CD8-positive, alpha-beta T cell (primary cell): ENCODE measurements at regions of chr6 and their contacts with region 1.

Region 1: GRCh38 chr6:73262671-73263569 is at the start of gene KHDC1:
- DNase-seq: peak; percentile 16 to 83 (median 59)
- ATAC-seq: peak; percentile 88
- H3K4me3 ChIP-seq: peak within 1 kb of the TSS; percentile 87 to 92
- H3K4me3 Mint-ChIP-seq: peak within 1 kb of the TSS; percentile 84
- H3K27ac ChIP-seq: peak within 1 kb of the TSS; percentile 62 to 80
- H3K27ac Mint-ChIP-seq: peak within 1 kb of the TSS; percentile 84
- H3K4me1 ChIP-seq: peaks cover 19% of the 10 kb centered on the region
- H3K4me1 Mint-ChIP-seq: peaks cover 34% of the 10 kb centered on the region
- H3K27me3 ChIP-seq: no peaks in the 10 kb centered on the region
- H3K27me3 Mint-ChIP-seq: no peaks in the 10 kb centered on the region
- CTCF ChIP-seq: no peak
- total RNA-seq, gene KHDC1: 0.60 to 0.86 TPM

Region 2: GRCh38 chr6:72622094-72622940 is 640.6 kb before region 1 on chr6:
- CTCF ChIA-PET with region 1: no interaction called
- POLR2A ChIA-PET with region 1: no interaction called
- intact Hi-C with region 1: loop called in 1 of 2 experiments (anchors 2 kb)
- DNase-seq: peak; percentile 34 to 82 (median 59)
- ATAC-seq: peak; percentile 42
- H3K4me3 ChIP-seq: peak overlapping the region; percentile 79 to 80
- H3K4me3 Mint-ChIP-seq: peak overlapping the region; percentile 96
- H3K27ac ChIP-seq: peak overlapping the region in 1 of 2 experiments; percentile 17
- H3K27ac Mint-ChIP-seq: peak overlapping the region; percentile 19
- H3K4me1 ChIP-seq: peaks cover 21% of the 10 kb centered on the region
- H3K4me1 Mint-ChIP-seq: peaks cover 57% of the 10 kb centered on the region
- H3K27me3 ChIP-seq: no peaks in the 10 kb centered on the region
- H3K27me3 Mint-ChIP-seq: no peaks in the 10 kb centered on the region
- CTCF ChIP-seq: peak; percentile 15

Region 3: DNA sequence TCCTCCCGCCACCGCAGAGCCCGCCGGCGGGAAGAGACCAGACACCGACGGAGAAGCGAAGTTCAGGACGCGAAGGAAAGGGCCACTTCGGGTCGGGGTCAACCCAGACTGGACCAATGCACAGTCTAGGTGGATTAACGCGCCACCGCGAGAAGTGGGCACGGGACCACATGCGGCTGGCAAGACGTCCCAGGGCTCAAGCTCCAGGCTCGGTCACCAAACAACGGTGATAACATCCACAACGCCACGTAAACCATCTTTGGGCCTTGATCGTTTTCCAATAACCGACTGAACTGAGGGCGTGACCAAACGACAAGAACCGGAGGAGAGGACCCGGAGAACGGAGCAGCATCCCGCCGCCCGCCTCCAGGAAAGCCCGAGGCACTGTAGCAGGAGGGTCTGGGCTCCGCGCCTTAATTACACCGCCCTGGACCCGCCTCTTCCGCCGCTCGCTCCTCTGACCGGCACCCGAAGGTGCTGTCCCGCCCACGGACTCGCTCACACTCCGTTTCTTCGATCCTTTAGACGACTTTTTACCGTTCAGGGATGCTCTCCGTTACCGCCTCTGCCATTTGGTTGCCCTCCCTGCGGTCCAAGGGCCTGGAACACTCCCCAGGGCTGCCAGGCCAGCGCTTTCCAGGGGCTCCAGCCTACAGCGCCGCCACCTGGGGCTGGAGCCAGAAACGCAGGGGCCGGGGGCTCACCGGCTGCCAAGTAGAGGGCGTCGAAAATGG is 47.0 kb after region 1 on chr6:
- CTCF ChIA-PET with region 1: no interaction called
- POLR2A ChIA-PET with region 1: no interaction called
- intact Hi-C with region 1: loop called in 1 of 2 experiments (anchors 5 kb)
- DNase-seq: peak in 8 of 9 experiments; percentile 23 to 70 (median 42)
- ATAC-seq: peak; percentile 78
- H3K4me3 ChIP-seq: peak overlapping the region; percentile 71 to 83
- H3K4me3 Mint-ChIP-seq: peak overlapping the region; percentile 95
- H3K27ac ChIP-seq: peak overlapping the region in 1 of 2 experiments; percentile 67
- H3K27ac Mint-ChIP-seq: peak overlapping the region; percentile 60
- H3K4me1 ChIP-seq: peaks cover 5% of the 10 kb centered on the region
- H3K4me1 Mint-ChIP-seq: peaks cover 21% of the 10 kb centered on the region
- H3K27me3 ChIP-seq: peaks cover 0 to 6% of the 10 kb centered on the region in 2 experiments
- H3K27me3 Mint-ChIP-seq: peaks cover 20% of the 10 kb centered on the region
- CTCF ChIP-seq: no peak

Region 4: DNA sequence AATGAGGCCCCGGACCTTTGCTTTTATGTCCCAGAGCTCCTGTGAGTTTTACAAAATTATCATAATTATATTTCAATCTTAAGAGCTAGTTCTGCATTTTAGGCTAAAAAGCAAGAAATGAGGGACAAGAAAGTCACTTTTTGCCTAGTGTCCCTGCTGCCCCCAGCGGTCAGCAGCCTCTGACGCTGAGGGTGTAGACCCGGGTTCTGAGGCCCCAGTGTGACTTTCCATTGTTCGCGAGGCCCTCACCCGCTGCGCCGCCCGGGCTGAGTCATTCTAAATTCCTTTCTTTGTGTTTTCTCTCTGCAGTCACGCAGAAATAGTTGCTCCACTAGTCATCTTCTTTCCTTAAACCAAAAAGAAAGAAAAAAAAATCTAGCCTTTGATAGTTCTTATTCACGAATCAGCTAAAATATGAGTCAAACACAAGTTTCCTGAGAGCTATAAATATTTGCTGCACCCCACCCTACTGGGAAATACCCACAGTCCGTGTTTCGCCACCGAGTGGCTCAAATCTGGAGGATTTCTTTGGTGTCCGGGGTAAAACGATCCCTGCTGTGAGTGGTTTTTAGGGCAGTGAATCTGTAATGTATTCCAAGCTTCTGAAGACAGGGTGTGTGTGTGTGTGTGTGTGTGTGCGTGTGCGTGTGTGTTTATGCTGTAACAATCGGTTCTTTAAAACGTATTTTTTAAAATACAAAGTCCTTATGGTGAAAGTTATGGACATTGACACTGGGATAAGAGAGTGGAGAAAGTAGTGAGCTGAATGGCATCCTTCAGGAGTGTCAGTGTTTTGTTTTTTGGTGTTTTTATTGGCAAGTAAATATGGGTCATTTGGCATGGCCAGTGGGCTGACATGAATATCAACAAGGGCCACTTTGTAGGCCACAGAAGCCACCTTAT is 317.6 kb after region 1 on chr6:
- CTCF ChIA-PET with region 1: no interaction called
- POLR2A ChIA-PET with region 1: no interaction called
- intact Hi-C with region 1: loop called in 1 of 2 experiments (anchors 10 kb)
- DNase-seq: peak; percentile 3 to 78 (median 64)
- ATAC-seq: peak; percentile 76
- H3K4me3 ChIP-seq: peak overlapping the region in 1 of 2 experiments; percentile 25
- H3K4me3 Mint-ChIP-seq: peak overlapping the region; percentile 69
- H3K27ac ChIP-seq: peak overlapping the region; percentile 17 to 68
- H3K27ac Mint-ChIP-seq: peak overlapping the region; percentile 88
- H3K4me1 ChIP-seq: peaks cover 25% of the 10 kb centered on the region
- H3K4me1 Mint-ChIP-seq: peaks cover 22% of the 10 kb centered on the region
- H3K27me3 ChIP-seq: no peaks in the 10 kb centered on the region
- H3K27me3 Mint-ChIP-seq: no peaks in the 10 kb centered on the region
- CTCF ChIP-seq: no peak

Region 5: DNA sequence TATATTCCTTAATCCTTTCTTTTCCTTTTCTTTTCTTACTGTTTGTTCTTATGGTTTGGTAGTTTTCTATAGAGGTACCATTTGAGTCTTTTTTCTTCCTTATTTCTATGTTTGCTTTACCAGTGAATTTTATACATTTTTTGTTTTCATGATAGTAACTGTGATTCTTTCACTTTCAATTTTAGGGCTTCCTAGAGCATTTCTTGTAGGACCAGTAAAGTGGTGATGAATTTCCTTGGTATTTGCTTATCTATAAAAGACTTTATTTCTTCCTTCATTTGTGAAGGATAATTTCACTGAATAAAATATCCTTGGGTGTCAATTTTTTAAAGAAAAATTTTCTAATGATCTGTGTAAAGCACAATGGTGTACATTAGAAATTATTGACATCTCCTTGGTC is 1070.5 kb after region 1 on chr6:
- CTCF ChIA-PET with region 1: no interaction called
- POLR2A ChIA-PET with region 1: no interaction called
- intact Hi-C with region 1: no loop called
- DNase-seq: no peak
- ATAC-seq: no peak
- H3K4me3 ChIP-seq: no peak overlapping the region
- H3K4me3 Mint-ChIP-seq: no peak overlapping the region
- H3K27ac ChIP-seq: no peak overlapping the region
- H3K27ac Mint-ChIP-seq: no peak overlapping the region
- H3K4me1 ChIP-seq: no peaks in the 10 kb centered on the region
- H3K4me1 Mint-ChIP-seq: no peaks in the 10 kb centered on the region
- H3K27me3 ChIP-seq: no peaks in the 10 kb centered on the region
- H3K27me3 Mint-ChIP-seq: no peaks in the 10 kb centered on the region
- CTCF ChIP-seq: no peak